ENCODE measurements at regions of chr7 and their contacts with region 1.

Region 1: DNA sequence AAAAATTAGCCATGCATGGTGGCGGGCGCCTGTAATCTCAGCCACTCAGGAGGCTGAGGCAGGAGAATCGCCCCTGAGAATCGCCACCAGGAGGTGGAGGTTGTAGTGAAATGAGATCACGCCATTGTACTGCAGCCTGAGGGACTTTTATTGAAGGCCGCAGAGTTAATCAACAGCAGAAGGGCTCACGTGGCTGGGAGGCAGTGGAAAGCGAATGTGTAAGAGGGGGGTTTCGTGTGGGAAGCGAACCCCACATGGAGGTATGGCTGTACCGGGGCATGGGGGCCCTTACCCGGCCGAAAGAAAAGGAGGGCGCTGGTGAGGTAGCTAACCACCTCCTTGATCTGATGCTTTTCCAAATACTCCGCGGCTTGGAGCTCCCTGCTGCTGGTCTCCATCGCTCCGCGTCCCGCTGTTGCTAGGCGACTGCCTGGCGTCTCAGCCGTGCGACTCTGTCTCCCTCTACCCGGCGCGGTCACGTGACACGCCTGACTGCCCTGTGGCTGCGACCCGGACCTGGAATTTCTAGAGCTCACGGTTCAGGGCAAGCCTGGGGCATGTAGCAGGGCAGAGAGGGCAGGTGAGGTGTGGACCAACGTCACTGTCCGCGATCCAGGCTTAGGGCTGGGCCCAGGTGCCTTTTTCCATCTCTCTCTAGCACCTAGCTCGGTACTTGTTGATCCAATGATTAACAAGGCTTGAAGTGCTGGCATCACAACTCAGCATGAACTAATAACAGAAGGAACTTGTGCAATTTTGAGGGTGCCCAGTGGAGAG is at the start of gene EFCAB10:
- DNase-seq: peak; percentile 72 to 89 (median 84)
- H3K4me3 ChIP-seq: peak within 1 kb of the TSS; percentile 42 to 79 (median 65)
- H3K27ac ChIP-seq: peak within 1 kb of the TSS in 4 of 59 donors; percentile 46 to 61 (median 59)
- H3K27me3 ChIP-seq: no peaks in the 10 kb centered on the region
- CTCF ChIP-seq: peak in 13 of 56 donors; percentile 4 to 33 (median 14)
- total RNA-seq, gene EFCAB10: 0.68 to 6.1 (median 2.3) TPM in 119 of 120 experiments, not detected in the other

Region 2: DNA sequence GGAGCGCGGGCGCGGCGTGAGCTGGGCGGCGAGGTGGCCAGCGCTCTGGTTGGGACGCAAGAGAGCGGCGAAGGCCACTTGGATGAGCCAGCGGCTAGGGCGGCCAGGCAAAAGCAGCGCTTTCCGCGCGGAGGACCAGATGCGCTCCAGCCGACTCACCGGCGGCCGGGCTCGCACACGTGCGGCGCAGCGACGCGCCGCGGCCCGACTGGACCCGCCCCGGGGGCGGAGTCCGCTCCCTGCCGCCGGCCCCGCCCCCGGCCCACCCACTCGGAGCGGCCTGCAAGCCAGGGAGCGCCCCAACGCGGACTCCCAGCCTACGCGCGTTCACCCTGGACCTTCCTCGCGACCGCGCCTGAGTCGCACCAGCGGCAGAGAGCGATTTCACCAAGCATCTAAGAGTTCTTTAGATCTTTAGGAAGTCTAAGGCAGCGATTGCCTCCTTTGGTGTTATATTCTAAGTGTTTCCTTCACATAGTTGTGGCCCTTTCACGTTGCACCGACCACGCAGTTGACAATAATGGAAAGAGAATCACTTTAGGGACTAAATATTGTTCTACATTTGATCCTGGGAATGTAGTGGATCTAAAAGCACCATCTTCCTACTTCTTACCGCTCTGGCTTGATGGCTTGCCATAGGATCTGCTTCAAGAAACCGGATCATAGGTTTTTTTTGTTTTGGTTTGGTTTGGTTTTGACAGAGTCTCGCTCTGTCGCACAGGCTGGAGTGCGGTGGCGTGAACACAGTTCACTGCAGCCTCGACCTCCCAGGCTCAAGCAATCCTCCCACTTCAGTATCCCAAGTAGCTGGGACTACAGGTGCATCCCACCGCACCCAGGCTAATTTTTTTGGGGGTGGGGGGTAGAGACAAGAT is 59.0 kb before region 1 on chr7 and contains the start of gene PUS7:
- intact Hi-C with region 1: loop called in 1 of 2 experiments (anchors 5 kb)
- DNase-seq: peak; percentile 76 to 90 (median 85)
- H3K4me3 ChIP-seq: peak within 1 kb of the TSS; percentile 59 to 95 (median 81)
- H3K27ac ChIP-seq: peak within 1 kb of the TSS; percentile 36 to 97 (median 89)
- H3K27me3 ChIP-seq: no peaks in the 10 kb centered on the region
- CTCF ChIP-seq: peak in 37 of 56 donors; percentile 6 to 71 (median 31)
- total RNA-seq, gene PUS7: 9.3 to 22.2 (median 14.4) TPM

Region 3: GRCh38 chr7:105748701-105749100 is 167.4 kb after region 1 on chr7:
- intact Hi-C with region 1: no loop called
- DNase-seq: no peak
- H3K4me3 ChIP-seq: no peak overlapping the region
- H3K27ac ChIP-seq: no peak overlapping the region
- H3K27me3 ChIP-seq: no peaks in the 10 kb centered on the region
- CTCF ChIP-seq: no peak

Measured in dorsolateral prefrontal cortex (tissue), 120 donors.